ENCODE measurements at regions of chr9 and their contacts with region 1.

Region 1: GRCh38 chr9:36250079-36250478 is 8.2 kb downstream of the GNE start:
- H3K4me3 Mint-ChIP-seq: no peak overlapping the region
- H3K27ac Mint-ChIP-seq: peak overlapping the region; percentile 55
- H3K4me1 Mint-ChIP-seq: peaks cover 25% of the 10 kb centered on the region
- H3K27me3 Mint-ChIP-seq: no peaks in the 10 kb centered on the region

Region 2: DNA sequence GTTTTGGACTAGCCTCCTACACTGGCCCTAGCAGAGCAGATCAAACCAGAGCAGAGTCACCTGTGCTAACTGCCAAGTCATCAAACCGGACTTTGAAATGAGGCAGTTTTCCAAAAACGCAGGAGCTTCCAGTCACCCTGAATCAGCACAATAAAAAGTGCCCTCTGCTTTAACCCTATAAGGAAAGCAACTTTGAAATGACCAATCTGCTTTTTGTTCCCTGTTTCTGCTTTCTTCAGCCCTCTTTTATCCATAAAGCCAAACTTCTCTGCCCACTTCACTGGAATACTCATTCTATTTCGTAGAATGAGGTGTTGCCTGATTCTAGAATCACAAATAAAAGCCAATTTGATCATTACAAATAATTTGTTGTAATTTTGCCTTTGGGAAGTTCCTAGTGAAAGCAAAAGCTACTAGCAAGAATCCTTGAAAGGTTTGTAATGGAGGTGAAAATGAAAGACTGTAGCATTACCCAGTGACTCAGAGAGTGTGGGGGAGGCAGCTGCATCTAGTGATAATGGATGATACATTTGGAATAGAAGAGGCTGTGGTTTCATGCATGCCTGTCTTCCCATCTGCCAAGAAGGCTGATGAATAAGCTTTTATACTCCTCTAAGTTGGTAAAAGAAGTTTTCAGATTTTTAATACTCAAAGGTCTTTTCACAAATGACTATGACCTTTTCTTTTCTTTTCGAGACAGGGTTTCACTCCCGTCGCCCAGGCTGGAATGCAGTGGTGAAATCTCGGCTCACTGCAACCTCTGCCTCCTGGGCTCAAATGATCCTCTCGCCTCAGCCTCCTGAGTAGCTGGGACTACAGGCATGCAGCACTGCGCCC is 325.9 kb before region 1 on chr9:
- intact Hi-C with region 1: no loop called
- H3K4me3 Mint-ChIP-seq: no peak overlapping the region
- H3K27ac Mint-ChIP-seq: no peak overlapping the region
- H3K4me1 Mint-ChIP-seq: peaks cover 15% of the 10 kb centered on the region
- H3K27me3 Mint-ChIP-seq: peaks cover 2% of the 10 kb centered on the region

Region 3: GRCh38 chr9:36328798-36329411 is 78.8 kb after region 1 on chr9:
- intact Hi-C with region 1: loop called (anchors 1 kb)
- H3K4me3 Mint-ChIP-seq: no peak overlapping the region
- H3K27ac Mint-ChIP-seq: no peak overlapping the region
- H3K4me1 Mint-ChIP-seq: peaks cover 18% of the 10 kb centered on the region
- H3K27me3 Mint-ChIP-seq: no peaks in the 10 kb centered on the region

Region 4: GRCh38 chr9:36400332-36401163 is 150.5 kb after region 1 on chr9:
- intact Hi-C with region 1: loop called (anchors 5 kb)
- H3K4me3 Mint-ChIP-seq: peak overlapping the region; percentile 85
- H3K27ac Mint-ChIP-seq: peak overlapping the region; percentile 90
- H3K4me1 Mint-ChIP-seq: peaks cover 48% of the 10 kb centered on the region
- H3K27me3 Mint-ChIP-seq: no peaks in the 10 kb centered on the region

Region 5: DNA sequence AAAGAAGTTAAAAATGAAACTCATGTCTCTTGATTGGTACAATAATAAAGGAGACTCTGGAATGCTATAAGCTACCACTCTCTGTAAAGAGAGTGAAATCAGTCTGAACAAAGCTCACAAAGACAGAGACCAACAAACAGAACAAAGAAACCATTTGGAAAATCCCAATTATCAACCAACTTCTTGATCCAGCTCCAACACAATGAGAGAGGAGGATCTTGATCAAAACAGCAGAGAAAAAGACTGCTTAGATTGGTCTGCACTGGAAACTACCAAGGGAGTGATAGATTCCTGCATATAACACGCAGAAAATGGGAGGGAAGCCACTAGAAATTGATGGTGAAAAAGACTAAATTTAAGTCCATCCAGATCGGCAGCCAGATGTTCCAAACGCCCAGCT is 173.1 kb after region 1 on chr9:
- intact Hi-C with region 1: no loop called
- H3K4me3 Mint-ChIP-seq: no peak overlapping the region
- H3K27ac Mint-ChIP-seq: no peak overlapping the region
- H3K4me1 Mint-ChIP-seq: peaks cover 6% of the 10 kb centered on the region
- H3K27me3 Mint-ChIP-seq: no peaks in the 10 kb centered on the region

Region 6: DNA sequence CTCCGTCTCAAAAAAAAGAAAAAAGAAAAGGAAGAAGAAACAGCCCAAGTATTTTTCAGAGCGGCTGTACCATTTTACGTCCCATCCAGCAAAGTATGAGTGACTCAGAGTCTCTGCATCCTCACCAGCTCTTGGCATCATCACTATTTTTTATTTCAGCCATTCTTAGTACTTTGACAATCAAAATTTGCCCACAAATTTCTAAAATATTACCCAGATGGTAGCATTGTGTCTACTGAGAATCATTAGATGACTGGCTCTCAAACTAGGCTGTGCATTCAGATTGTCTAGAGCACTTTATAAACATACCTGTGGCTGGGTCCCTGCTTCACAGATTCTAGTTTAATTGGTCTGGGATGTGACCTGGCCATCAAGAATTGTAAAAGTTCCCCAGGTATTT is 301.1 kb after region 1 on chr9:
- intact Hi-C with region 1: loop called (anchors 10 kb)
- H3K4me3 Mint-ChIP-seq: no peak overlapping the region
- H3K27ac Mint-ChIP-seq: no peak overlapping the region
- H3K4me1 Mint-ChIP-seq: peaks cover 19% of the 10 kb centered on the region
- H3K27me3 Mint-ChIP-seq: peaks cover 2% of the 10 kb centered on the region

Measured in dendritic cell treated with granulocyte-macrophage colony-stimulating factor and Interleukin-4, amounts not matched to agents 40 ng/mL and 50 ng/mL, for 4 days (primary cell).